ENCODE measurements at regions of chr19 and their contacts with region 1.

Region 1: GRCh38 chr19:46529622-46530462 is 34.2 kb upstream of the PNMA8B start:
- DNase-seq: peak; percentile 3
- H3K4me3 ChIP-seq: no peak overlapping the region; the same call in 1 of the 2 replicates
- CTCF ChIP-seq: peak; percentile 83

Region 2: DNA sequence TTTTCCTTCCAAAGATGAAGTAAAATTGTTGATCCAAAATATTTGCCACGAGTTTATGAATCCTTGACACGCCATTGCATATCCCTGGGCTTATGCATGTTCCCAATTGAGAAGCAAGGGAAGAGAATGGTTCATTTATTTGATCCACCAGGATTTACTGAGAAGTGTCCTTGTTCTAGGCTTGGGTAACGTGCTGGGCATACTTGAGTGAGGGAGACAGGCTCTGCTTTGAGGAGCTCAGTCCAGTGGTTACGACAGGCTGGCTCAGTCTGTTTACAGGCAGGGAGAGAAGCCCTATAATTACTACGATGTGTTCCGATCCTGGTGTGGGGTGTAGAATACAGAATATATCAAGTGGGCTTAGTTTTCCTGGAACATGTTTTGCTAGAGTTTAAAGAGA is 94.8 kb before region 1 on chr19:
- CTCF ChIA-PET with region 1: no interaction called
- POLR2A ChIA-PET with region 1: no interaction called
- DNase-seq: no peak
- H3K4me3 ChIP-seq: no peak overlapping the region
- CTCF ChIP-seq: no peak

Region 3: DNA sequence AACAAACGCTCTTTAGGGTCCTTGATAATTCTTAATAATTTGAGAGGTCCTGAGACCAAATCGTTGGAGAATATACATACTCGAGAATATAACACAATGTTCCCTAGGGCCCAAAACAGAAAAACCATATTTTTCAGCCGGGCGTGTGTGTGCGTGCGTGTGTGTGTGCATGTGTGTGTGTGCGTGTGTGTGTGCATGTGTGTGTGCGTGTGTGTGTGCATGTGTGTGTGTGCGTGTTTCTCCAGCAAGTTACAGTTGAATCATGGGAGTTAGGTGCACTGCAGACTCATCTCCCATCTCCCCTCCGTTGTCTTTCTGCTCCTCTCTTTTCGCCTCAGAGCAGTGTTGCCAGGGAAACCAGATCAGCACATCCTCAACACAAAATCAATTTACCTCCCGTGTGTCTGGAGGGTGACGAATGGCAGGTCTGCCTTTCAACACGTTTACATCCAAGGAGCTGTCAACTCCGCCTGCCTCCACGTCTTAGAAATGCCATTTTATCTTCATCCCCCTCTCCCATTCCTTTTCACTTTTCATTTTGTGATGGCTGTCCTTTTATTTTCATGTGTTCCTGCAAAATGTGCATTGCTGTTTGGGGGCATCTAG is 25.9 kb before region 1 on chr19:
- CTCF ChIA-PET with region 1: interaction called, 12 read pairs
- POLR2A ChIA-PET with region 1: no interaction called
- DNase-seq: no peak
- H3K4me3 ChIP-seq: no peak overlapping the region
- CTCF ChIP-seq: no peak

Region 4: GRCh38 chr19:46513461-46514236 is 16.2 kb before region 1 on chr19:
- CTCF ChIA-PET with region 1: interaction called, 126 read pairs
- POLR2A ChIA-PET with region 1: no interaction called
- DNase-seq: no peak
- H3K4me3 ChIP-seq: no peak overlapping the region
- CTCF ChIP-seq: peak; percentile 76

Region 5: DNA sequence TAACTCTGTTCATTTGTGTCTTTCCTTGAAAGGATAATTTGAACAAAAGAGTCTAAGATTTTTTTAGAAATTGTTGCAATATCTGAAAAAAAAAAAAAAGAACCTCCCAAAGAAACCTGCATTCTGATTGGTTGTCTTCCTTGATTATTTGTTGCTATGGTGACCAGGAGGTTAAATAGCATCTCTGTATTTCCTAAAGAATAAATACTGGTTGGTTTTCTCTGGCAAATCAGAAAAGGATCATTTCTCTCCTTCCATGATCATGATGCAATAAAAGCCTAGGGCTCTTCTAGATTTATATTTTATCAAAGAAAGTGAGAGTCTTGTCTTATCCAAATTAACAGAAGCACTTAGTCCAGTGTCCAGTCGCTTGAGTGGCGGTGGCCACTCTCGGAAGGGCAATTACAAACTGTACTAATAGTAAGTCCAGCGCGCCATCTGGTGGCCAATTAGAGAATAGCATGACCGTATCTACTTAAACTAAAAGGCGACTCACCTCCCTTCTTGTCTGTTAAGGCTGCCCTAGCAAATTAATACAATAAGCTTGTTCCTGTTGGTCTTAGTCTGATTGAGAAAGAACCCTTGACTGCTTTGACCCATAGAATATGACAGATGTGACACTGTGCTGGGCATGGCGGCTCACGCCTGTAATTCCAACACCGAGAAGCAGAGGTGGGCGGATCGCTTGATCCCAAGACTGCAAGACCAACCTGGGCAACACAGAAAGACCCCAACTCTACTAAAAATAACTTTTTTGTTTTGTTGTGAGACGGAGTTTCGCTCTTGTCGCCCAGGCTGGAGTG is 12.8 kb after region 1 on chr19:
- CTCF ChIA-PET with region 1: interaction called, 373 read pairs
- POLR2A ChIA-PET with region 1: no interaction called
- DNase-seq: peak; percentile 73
- H3K4me3 ChIP-seq: no peak overlapping the region
- CTCF ChIP-seq: peak; percentile 60

Region 6: GRCh38 chr19:46704379-46705076 is 174.7 kb after region 1 on chr19:
- CTCF ChIA-PET with region 1: no interaction called
- POLR2A ChIA-PET with region 1: no interaction called
- DNase-seq: no peak
- H3K4me3 ChIP-seq: no peak overlapping the region
- CTCF ChIP-seq: peak; percentile 91

Region 7: GRCh38 chr19:46728693-46729676 is 199.1 kb after region 1 on chr19:
- CTCF ChIA-PET with region 1: interaction called, 25 read pairs
- POLR2A ChIA-PET with region 1: no interaction called
- DNase-seq: no peak
- H3K4me3 ChIP-seq: no peak overlapping the region
- CTCF ChIP-seq: peak; percentile 90

Region 8: DNA sequence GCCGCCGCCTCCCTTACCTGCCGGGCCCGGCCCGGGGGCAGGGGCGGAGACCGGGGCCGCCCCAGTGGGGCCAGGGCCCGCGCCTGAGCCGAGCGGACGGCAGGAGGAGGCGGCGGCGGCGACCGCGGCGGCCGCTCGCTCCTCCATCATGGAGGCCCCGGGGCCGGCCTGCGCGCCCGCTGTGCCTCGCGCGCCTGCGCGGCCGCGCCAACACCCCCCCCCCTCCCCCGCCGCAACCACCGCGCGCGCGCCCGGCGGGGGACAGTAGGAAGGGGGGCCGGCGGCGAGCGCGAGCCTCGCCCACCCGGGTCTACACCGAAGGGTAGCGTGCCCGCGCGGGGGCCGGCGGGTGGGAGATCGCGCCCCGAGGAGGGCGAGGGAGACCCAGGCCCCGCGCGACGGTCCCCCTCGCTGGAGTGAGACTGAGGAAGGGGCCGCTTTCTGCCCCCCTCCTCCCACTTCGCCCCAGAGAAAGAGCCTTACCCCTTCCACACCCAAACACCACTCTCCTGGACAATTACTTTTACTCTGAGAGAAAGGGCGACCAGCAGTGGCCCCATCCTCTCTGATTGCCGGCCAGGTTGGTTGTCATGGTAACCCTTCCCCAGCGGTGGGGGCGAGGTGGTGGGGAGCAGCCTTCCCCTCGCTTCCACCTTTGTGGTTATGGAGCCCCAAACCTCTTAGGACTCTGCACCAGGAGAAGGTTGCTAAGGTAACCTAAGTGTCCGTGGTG is 216.6 kb after region 1 on chr19 and contains the start of gene STRN4:
- CTCF ChIA-PET with region 1: interaction called, 14 read pairs
- POLR2A ChIA-PET with region 1: no interaction called
- DNase-seq: no peak
- H3K4me3 ChIP-seq: peak within 1 kb of the TSS; percentile 91
- CTCF ChIP-seq: no peak

Measured in AG04449 (cell line).